ENCODE measurements at regions of chr9 and their contacts with region 1.

Region 1: DNA sequence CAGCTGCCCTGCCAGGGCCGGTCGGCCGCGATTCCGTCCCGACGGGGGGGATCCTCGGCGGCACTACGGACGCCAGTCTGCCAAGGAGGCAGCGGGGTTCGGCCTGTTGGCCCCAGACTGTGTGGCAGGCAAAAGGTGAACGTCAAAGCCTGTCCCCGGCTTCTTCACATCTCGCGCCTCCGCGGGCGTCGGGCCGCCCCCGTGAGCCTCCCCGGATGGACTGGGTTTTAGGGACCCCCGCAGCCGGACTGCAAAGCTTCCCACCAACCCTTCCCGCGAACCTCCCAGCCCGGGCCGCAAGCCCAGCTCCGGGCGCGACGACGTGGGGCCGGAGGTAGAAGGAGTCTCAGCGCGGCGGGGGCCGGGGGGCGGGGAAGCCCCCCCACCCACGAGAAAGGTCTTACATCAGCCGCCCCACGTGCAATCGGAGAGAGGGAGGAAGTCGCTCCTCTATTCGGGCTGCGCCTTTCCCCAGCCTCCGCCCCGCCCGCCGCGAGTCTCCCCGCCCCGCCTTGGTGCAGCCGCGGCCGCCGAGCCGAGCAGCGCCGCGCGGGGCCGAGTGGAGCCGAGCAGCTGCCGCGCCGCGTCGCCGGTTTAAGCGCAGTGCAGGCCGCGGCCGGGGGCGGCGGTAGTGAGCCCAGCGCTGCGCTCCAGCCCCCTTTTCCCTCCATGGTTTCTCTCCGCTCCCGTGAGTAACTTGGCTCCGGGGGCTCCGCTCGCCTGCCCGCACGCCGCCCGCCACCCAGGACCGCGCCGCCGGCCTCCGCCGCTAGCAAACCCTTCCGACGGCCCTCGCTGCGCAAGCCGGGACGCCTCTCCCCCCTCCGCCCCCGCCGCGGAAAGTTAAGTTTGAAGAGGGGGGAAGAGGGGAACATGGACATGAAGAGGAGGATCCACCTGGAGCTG is at the start of gene ANP32B:
- DNase-seq: peak; percentile 95
- ATAC-seq: peak; percentile 80
- H3K4me3 Mint-ChIP-seq: peak within 1 kb of the TSS; percentile 86
- H3K27ac Mint-ChIP-seq: peak within 1 kb of the TSS; percentile 92
- H3K4me1 Mint-ChIP-seq: peaks cover 38% of the 10 kb centered on the region
- H3K27me3 Mint-ChIP-seq: no peaks in the 10 kb centered on the region
- CTCF ChIP-seq: no peak
- total RNA-seq, gene ANP32B: 162 and 173 TPM in 2 replicates

Region 2: DNA sequence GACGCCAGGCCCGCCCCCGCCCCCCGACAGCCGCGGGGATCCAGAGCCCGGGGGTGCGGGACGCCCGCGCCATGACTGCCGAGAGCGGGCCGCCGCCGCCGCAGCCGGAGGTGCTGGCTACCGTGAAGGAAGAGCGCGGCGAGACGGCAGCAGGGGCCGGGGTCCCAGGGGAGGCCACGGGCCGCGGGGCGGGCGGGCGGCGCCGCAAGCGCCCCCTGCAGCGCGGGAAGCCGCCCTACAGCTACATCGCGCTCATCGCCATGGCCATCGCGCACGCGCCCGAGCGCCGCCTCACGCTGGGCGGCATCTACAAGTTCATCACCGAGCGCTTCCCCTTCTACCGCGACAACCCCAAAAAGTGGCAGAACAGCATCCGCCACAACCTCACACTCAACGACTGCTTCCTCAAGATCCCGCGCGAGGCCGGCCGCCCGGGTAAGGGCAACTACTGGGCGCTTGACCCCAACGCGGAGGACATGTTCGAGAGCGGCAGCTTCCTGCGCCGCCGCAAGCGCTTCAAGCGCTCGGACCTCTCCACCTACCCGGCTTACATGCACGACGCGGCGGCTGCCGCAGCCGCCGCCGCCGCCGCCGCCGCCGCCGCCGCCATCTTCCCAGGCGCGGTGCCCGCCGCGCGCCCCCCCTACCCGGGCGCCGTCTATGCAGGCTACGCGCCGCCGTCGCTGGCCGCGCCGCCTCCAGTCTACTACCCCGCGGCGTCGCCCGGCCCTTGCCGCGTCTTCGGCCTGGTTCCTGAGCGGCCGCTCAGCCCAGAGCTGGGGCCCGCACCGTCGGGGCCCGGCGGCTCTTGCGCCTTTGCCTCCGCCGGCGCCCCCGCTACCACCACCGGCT is 128.9 kb before region 1 on chr9:
- CTCF ChIA-PET with region 1: no interaction called
- POLR2A ChIA-PET with region 1: no interaction called
- intact Hi-C with region 1: loop called (anchors 5 kb)
- DNase-seq: peak; percentile 49
- ATAC-seq: peak; percentile 81
- H3K4me3 Mint-ChIP-seq: peak overlapping the region; percentile 85
- H3K27ac Mint-ChIP-seq: no peak overlapping the region
- H3K4me1 Mint-ChIP-seq: peaks cover 25% of the 10 kb centered on the region
- H3K27me3 Mint-ChIP-seq: peaks cover 62% of the 10 kb centered on the region
- CTCF ChIP-seq: no peak

Region 3: GRCh38 chr9:98010445-98010844 is 27.5 kb after region 1 on chr9:
- CTCF ChIA-PET with region 1: interaction called, 3 read pairs
- POLR2A ChIA-PET with region 1: interaction called, 3 read pairs
- intact Hi-C with region 1: loop called (anchors 1 kb)
- DNase-seq: no peak
- ATAC-seq: peak; percentile 96
- H3K4me3 Mint-ChIP-seq: no peak overlapping the region
- H3K27ac Mint-ChIP-seq: peak overlapping the region; percentile 24
- H3K4me1 Mint-ChIP-seq: peaks cover 21% of the 10 kb centered on the region
- H3K27me3 Mint-ChIP-seq: no peaks in the 10 kb centered on the region
- CTCF ChIP-seq: no peak

Region 4: GRCh38 chr9:98045234-98046179 is 62.6 kb after region 1 on chr9:
- CTCF ChIA-PET with region 1: no interaction called
- POLR2A ChIA-PET with region 1: interaction called, 28 read pairs
- intact Hi-C with region 1: loop called (anchors 1 kb)
- DNase-seq: no peak
- ATAC-seq: peak; percentile 87
- H3K4me3 Mint-ChIP-seq: peak overlapping the region; percentile 83
- H3K27ac Mint-ChIP-seq: peak overlapping the region; percentile 84
- H3K4me1 Mint-ChIP-seq: peaks cover 53% of the 10 kb centered on the region
- H3K27me3 Mint-ChIP-seq: peaks cover under 1% of the 10 kb centered on the region
- CTCF ChIP-seq: no peak

Measured in activated B cell treated with CpG ODN at 0.5 μM for 24 hours (primary cell).